K562 (cell line): ENCODE measurements at regions of chr7 and their contacts with region 1.

Region 1: DNA sequence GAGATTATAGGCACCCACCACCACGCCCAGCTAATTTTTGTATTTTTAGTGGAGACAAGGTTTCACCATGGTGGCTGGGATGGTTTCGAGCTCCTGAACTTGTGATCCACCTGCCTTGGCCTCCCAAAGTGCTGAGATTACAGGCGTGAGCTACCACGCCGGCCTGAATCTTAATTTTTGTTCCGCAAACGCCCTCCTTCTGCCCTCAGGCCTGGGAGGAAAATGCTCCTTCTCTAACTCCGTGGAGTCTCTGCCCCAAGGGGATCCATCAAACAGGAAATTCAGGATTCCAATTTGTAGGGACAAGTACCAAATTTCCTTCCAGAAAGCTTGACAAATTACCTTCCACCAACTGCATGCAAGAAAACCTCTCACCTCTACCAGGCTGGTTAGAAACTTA is 43.2 kb downstream of the RBAK start:
- DNase-seq: no peak
- ATAC-seq: no peak
- H3K4me3 ChIP-seq: no peak overlapping the region
- H3K27ac ChIP-seq: no peak overlapping the region
- H3K4me1 ChIP-seq: peaks cover 1 to 4% of the 10 kb centered on the region in 2 experiments; a peak in 2 of 5 replicates
- H3K27me3 ChIP-seq: peaks cover 0 to 13% of the 10 kb centered on the region in 2 experiments; a peak in 1 of 5 replicates
- CTCF ChIP-seq: no peak
- EP300 ChIP-seq: no peak
- POLR2A ChIP-seq: no peak
- RAD21 ChIP-seq: no peak

Region 2: GRCh38 chr7:4797858-4798705 is 290.8 kb before region 1 on chr7:
- CTCF ChIA-PET with region 1: interaction called, 14 read pairs
- POLR2A ChIA-PET with region 1: interaction called, 3 read pairs
- in situ Hi-C with region 1: loop called (anchors 10 kb)
- intact Hi-C with region 1: loop called (anchors 1 kb)
- DNase-seq: peak; percentile 76 to 86 (median 83)
- ATAC-seq: peak; percentile 92
- H3K4me3 ChIP-seq: no peak overlapping the region
- H3K27ac ChIP-seq: no peak overlapping the region
- H3K4me1 ChIP-seq: peaks cover 0 to 41% of the 10 kb centered on the region in 2 experiments; a peak in 3 of 5 replicates
- H3K27me3 ChIP-seq: no peaks in the 10 kb centered on the region
- CTCF ChIP-seq: peak; percentile 87 to 99 (median 99)
- EP300 ChIP-seq: no peak
- POLR2A ChIP-seq: no peak
- RAD21 ChIP-seq: peak; percentile 70 to 90

Region 3: DNA sequence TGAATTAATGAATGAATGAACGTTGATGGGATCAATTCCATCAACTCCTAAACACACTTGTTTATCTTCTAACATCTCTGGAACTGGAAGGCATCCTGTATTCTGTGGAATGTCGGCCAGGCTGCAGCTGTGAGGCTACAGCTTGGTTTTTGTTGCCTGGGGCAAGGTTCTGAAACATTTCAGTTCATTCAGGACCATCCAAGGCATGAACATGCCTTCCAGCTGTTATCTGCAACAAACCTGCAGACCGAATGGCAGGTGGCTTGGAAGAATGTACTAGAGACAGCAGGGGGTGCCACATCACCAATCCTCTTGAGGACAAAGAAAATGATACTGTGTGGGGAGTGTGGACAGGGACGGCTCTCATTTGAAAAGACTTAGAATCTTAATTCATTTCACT is 239.5 kb before region 1 on chr7:
- CTCF ChIA-PET with region 1: interaction called, 10 read pairs
- POLR2A ChIA-PET with region 1: no interaction called
- in situ Hi-C with region 1: no loop called
- intact Hi-C with region 1: loop called (anchors 1 kb)
- DNase-seq: peak; percentile 48 to 69 (median 60)
- ATAC-seq: peak; percentile 85
- H3K4me3 ChIP-seq: no peak overlapping the region
- H3K27ac ChIP-seq: no peak overlapping the region
- H3K4me1 ChIP-seq: peaks cover 6 to 7% of the 10 kb centered on the region in 2 experiments; a peak in 3 of 5 replicates
- H3K27me3 ChIP-seq: no peaks in the 10 kb centered on the region
- CTCF ChIP-seq: peak; percentile 61 to 77 (median 66)
- EP300 ChIP-seq: no peak
- POLR2A ChIP-seq: no peak
- RAD21 ChIP-seq: peak; percentile 49 to 71

Region 4: GRCh38 chr7:5045558-5046396 is 43.1 kb before region 1 on chr7 and contains the start of gene RBAK:
- CTCF ChIA-PET with region 1: no interaction called
- POLR2A ChIA-PET with region 1: no interaction called
- in situ Hi-C with region 1: no loop called
- intact Hi-C with region 1: no loop called
- DNase-seq: peak; percentile 91 to 98 (median 92)
- ATAC-seq: peak; percentile 100
- H3K4me3 ChIP-seq: peak within 1 kb of the TSS; percentile 93
- H3K27ac ChIP-seq: peak within 1 kb of the TSS; percentile 79
- H3K4me1 ChIP-seq: peaks cover 0 to 12% of the 10 kb centered on the region in 2 experiments; a peak in 3 of 5 replicates
- H3K27me3 ChIP-seq: no peaks in the 10 kb centered on the region
- CTCF ChIP-seq: no peak
- EP300 ChIP-seq: no peak
- POLR2A ChIP-seq: peak; percentile 82
- RAD21 ChIP-seq: no peak
- polyA plus RNA-seq, gene RBAK: 2.7 to 3.3 TPM

Region 5: DNA sequence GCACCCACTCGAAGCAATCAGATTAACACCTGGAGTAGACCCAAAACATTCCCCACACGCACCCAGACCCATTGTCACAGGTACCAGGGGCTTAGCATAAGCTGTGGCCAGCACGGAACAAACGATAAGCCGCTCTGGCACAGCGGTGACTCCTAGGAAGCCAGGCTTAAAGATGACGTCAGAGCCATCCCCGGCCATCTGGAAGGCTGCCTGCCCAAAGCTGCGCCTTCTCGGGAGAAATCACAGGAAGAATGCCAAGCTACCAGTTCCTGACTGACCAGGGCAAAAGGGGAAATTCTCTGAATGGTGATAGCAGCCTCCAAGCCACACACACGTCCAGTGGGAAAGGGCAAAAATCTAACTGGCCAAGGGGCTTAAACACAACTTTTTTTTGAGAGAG is 88.2 kb after region 1 on chr7:
- CTCF ChIA-PET with region 1: no interaction called
- POLR2A ChIA-PET with region 1: no interaction called
- in situ Hi-C with region 1: no loop called
- intact Hi-C with region 1: loop called (anchors 1 kb)
- DNase-seq: no peak
- ATAC-seq: peak; percentile 60; the same call in 1 of the 3 replicates
- H3K4me3 ChIP-seq: no peak overlapping the region
- H3K27ac ChIP-seq: no peak overlapping the region
- H3K4me1 ChIP-seq: no peaks in the 10 kb centered on the region; a peak in 1 of 5 replicates
- H3K27me3 ChIP-seq: peaks cover 4 to 23% of the 10 kb centered on the region in 2 experiments; a peak in 4 of 5 replicates
- CTCF ChIP-seq: no peak
- EP300 ChIP-seq: no peak
- POLR2A ChIP-seq: no peak
- RAD21 ChIP-seq: no peak